ENCODE measurements at regions of chr1 and their contacts with region 1.

Region 1: GRCh38 chr1:244970661-244971551 is 106.6 kb upstream of the HNRNPU start:
- DNase-seq: peak; percentile 98
- H3K4me3 ChIP-seq: peak overlapping the region; percentile 54 to 76 (median 70)
- H3K27ac ChIP-seq: peak overlapping the region; percentile 97 to 100 (median 100)
- H3K4me1 ChIP-seq: peaks cover 0 to 31% (median 18%) of the 10 kb centered on the region in 6 donors
- H3K27me3 ChIP-seq: no peaks in the 10 kb centered on the region
- CTCF ChIP-seq: peak; percentile 56 to 88 (median 76)
- POLR2A ChIP-seq: peak; percentile 21 to 41 (median 29)

Region 2: GRCh38 chr1:244835276-244836134 is 135.4 kb before region 1 on chr1 and contains the start of gene COX20:
- intact Hi-C with region 1: loop called (anchors 10 kb)
- DNase-seq: peak; percentile 96
- H3K4me3 ChIP-seq: peak within 1 kb of the TSS; percentile 57 to 76 (median 70)
- H3K27ac ChIP-seq: peak within 1 kb of the TSS; percentile 96 to 99 (median 99)
- H3K4me1 ChIP-seq: peaks cover 30 to 64% (median 53%) of the 10 kb centered on the region in 6 donors
- H3K27me3 ChIP-seq: no peaks in the 10 kb centered on the region
- CTCF ChIP-seq: peak in 2 of 11 experiments; percentile 15 to 33
- POLR2A ChIP-seq: peak; percentile 1 to 67 (median 45)
- total RNA-seq, gene COX20: 20.7 to 30.9 (median 23.2) TPM

Region 3: DNA sequence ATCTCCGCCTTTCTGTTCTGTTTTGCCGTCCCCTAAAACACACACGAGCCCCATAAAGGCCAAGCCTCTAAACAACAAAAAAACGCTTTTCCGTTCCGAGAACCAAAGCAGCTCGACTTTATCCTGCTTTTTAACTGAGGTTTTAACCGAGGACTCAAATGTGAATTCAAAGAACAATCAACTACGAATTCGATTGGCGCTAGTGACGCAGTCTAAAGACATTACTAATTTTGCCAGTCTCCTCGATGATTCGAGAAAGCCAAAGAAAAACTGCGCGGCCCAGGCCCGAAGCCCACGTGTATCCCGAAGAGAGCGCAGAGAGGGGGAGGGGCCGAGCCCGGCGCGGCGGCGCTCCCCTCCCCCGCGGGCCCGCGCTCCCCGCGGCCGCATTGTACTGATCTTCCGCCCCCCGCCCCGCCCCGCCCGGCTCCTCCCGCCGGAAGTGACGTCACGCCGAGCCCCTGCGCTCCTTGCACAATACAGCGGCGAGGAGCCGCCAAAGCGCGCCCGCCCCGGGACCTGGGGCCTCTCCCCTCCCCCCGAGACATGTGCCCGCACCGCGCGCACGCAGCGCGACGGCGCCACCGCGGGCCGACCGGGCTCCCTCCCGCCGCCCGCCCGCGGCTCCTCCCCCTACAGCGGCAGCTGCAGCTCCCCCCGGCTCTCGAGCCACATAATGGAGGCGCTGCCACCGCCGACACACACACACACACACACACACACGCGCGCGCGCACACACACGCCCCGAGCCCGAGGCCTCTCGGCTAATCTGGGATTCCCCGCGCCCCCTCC is 108.0 kb before region 1 on chr1:
- intact Hi-C with region 1: loop called (anchors 2 kb)
- DNase-seq: peak; percentile 99
- H3K4me3 ChIP-seq: peak overlapping the region; percentile 71 to 97 (median 90)
- H3K27ac ChIP-seq: peak overlapping the region; percentile 99 to 100 (median 100)
- H3K4me1 ChIP-seq: peaks cover 44 to 63% (median 57%) of the 10 kb centered on the region in 6 donors
- H3K27me3 ChIP-seq: no peaks in the 10 kb centered on the region
- CTCF ChIP-seq: peak in 2 of 11 experiments; percentile 20 to 25
- POLR2A ChIP-seq: peak in 2 of 3 donors; percentile 56 to 72